Mammary epithelial cell (primary cell): ENCODE measurements at regions of chr3 and their contacts with region 1.

Region 1: DNA sequence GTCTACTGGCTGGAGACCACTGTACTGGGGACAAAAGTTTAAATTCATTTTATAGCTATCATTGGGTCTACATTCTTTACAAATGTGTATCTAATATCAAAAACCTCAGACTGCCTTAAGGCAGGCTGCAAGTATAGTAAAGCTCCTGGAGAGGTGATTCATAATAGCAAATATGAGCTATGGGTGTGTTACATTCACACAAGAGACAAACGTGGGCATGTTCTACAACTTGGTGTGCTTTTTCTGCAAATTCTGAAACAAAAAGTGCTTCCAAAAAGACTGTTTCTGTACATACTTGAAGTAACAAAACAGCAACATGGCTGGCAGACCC is 1101.4 kb downstream of the ROBO1 start:
- DNase-seq: peak; percentile 78
- H3K4me3 ChIP-seq: no peak overlapping the region
- H3K27ac ChIP-seq: peak overlapping the region; percentile 80
- H3K4me1 ChIP-seq: peaks cover 19% of the 10 kb centered on the region
- H3K27me3 ChIP-seq: no peaks in the 10 kb centered on the region
- CTCF ChIP-seq: no peak

Region 2: GRCh38 chr3:78978037-78978436 is 311.6 kb after region 1 on chr3:
- CTCF ChIA-PET with region 1: no interaction called
- dilution Hi-C with region 1: no loop called
- in situ Hi-C with region 1: loop called (anchors 10 to 25 kb)
- intact Hi-C with region 1: no loop called
- DNase-seq: peak; percentile 38
- H3K4me3 ChIP-seq: no peak overlapping the region
- H3K27ac ChIP-seq: no peak overlapping the region
- H3K4me1 ChIP-seq: peaks cover 3% of the 10 kb centered on the region
- H3K27me3 ChIP-seq: no peaks in the 10 kb centered on the region
- CTCF ChIP-seq: peak; percentile 48 to 65

Region 3: DNA sequence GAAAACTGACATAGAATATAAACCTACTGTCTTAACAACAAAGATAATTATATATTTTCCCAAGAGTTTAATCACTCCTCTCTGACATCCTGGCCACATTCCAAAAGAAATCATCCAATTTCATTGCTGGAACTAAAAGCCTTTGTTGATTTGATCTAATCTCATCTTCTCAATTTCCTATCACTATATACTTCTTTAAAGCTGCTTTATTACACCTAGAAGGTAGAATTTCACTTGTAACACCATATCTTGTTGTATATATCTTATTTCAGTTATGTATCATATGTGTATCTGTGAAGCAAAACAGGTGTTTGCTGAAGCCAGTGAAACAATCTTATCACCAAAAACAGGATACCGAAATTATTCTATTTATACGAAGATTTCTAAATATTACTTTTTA is 361.2 kb after region 1 on chr3:
- CTCF ChIA-PET with region 1: no interaction called
- dilution Hi-C with region 1: no loop called
- in situ Hi-C with region 1: loop called (anchors 10 kb)
- intact Hi-C with region 1: no loop called
- DNase-seq: no peak
- H3K4me3 ChIP-seq: no peak overlapping the region
- H3K27ac ChIP-seq: no peak overlapping the region
- H3K4me1 ChIP-seq: no peaks in the 10 kb centered on the region
- H3K27me3 ChIP-seq: no peaks in the 10 kb centered on the region
- CTCF ChIP-seq: no peak

Region 4: GRCh38 chr3:79032686-79033318 is 366.4 kb after region 1 on chr3:
- CTCF ChIA-PET with region 1: no interaction called
- dilution Hi-C with region 1: no loop called
- in situ Hi-C with region 1: loop called (anchors 10 kb)
- intact Hi-C with region 1: no loop called
- DNase-seq: peak; percentile 35
- H3K4me3 ChIP-seq: no peak overlapping the region
- H3K27ac ChIP-seq: no peak overlapping the region
- H3K4me1 ChIP-seq: no peaks in the 10 kb centered on the region
- H3K27me3 ChIP-seq: no peaks in the 10 kb centered on the region
- CTCF ChIP-seq: peak; percentile 55 to 63